ENCODE measurements at regions of chr2 and their contacts with region 1.

Region 1: GRCh38 chr2:112884869-112885505 is 26.0 kb upstream of the IL37 start:
- DNase-seq: no peak
- ATAC-seq: peak; percentile 28; the same call in 1 of the 2 replicates
- H3K4me3 ChIP-seq: no peak overlapping the region
- H3K27ac ChIP-seq: no peak overlapping the region
- H3K4me1 ChIP-seq: peaks cover 9% of the 10 kb centered on the region
- H3K27me3 ChIP-seq: no peaks in the 10 kb centered on the region
- CTCF ChIP-seq: peak; percentile 63
- POLR2A ChIP-seq: no peak
- RAD21 ChIP-seq: peak; percentile 66

Region 2: DNA sequence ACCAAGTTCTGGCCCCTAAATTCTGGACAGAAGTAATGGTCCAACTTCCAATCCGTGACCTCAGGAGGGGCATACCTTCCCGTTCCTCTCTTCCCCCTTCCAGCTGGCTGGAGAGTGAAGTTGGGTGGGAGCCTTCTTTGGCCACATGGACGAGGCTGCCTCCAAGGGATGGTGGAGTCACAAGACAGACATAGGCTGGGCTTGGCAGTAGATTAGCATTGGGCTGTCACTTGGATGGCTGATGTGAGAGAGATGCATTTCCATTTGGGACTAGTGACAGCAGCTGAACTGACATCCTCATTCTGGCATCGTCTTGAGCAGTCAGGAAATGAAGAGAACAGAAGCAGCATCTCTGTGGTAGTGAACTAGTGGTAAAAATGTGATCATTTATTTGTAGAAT is 151.5 kb before region 1 on chr2:
- CTCF ChIA-PET with region 1: no interaction called
- POLR2A ChIA-PET with region 1: no interaction called
- dilution Hi-C with region 1: no loop called
- in situ Hi-C with region 1: no loop called
- intact Hi-C with region 1: no loop called
- DNase-seq: no peak
- ATAC-seq: no peak
- H3K4me3 ChIP-seq: no peak overlapping the region
- H3K27ac ChIP-seq: no peak overlapping the region
- H3K4me1 ChIP-seq: peaks cover 1% of the 10 kb centered on the region; the same call in 1 of the 2 replicates
- H3K27me3 ChIP-seq: no peaks in the 10 kb centered on the region
- CTCF ChIP-seq: no peak
- POLR2A ChIP-seq: no peak
- RAD21 ChIP-seq: no peak

Region 3: DNA sequence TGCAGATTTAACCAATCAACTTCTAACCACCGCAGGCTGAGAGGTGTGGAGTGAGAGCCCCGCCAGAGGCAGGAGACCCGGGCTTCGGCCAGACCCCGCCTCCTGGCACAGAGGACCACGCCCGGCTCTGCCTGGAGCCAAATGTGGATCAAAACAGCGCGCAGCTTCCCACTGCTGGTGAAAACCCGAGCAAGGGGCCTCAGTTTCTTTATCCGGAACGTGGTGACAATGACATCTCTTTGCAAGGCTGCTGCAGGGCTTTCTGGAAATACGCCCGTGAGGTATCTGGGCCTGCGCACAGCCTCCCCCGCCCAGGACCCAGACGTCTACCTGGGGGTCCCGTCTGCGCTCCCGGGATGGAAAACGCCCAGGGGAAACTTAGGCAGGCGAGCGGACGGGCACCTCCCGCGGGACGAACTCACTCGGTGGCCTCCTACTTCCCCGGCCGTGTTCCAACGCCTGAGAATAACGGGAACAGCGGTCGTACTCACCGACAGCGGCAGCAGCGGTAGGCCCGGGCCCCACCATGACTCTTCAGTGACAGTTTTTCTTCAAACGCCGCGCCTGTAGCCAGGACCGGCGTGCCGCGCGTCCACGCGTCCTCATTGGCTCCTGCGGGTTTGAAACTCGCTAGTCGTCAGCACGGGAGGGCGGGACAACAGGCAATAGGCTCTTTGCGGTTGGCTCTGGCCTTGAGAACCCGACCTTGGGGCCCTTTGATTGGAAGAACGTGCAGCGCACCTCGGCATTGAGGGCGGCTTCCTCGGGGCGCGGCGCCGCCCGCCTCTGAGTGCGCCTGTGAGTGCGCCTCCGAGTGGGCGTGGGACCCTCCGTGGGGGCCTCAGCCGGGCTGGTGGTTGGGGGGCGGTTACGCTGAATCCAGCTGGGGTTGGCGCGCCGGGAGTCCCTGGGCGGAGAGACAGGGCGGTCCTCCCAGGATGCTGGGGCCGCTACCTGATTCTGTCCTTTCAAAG is 120.6 kb before region 1 on chr2 and contains the start of gene CKAP2L:
- CTCF ChIA-PET with region 1: no interaction called
- POLR2A ChIA-PET with region 1: no interaction called
- dilution Hi-C with region 1: no loop called
- in situ Hi-C with region 1: no loop called
- intact Hi-C with region 1: loop called (anchors 5 kb)
- DNase-seq: peak; percentile 98
- ATAC-seq: peak; percentile 99
- H3K4me3 ChIP-seq: peak within 1 kb of the TSS; percentile 79
- H3K27ac ChIP-seq: peak within 1 kb of the TSS; percentile 54
- H3K4me1 ChIP-seq: no peaks in the 10 kb centered on the region; the same call in 1 of the 2 replicates
- H3K27me3 ChIP-seq: no peaks in the 10 kb centered on the region
- CTCF ChIP-seq: no peak
- POLR2A ChIP-seq: peak; percentile 31; the same call in 1 of the 2 replicates
- RAD21 ChIP-seq: no peak
- total RNA-seq, gene CKAP2L: 9.9 and 13.3 TPM in 2 replicates

Region 4: GRCh38 chr2:112821142-112821541 is 63.8 kb before region 1 on chr2:
- CTCF ChIA-PET with region 1: no interaction called
- POLR2A ChIA-PET with region 1: no interaction called
- dilution Hi-C with region 1: no loop called
- in situ Hi-C with region 1: no loop called
- intact Hi-C with region 1: no loop called
- DNase-seq: no peak
- ATAC-seq: no peak
- H3K4me3 ChIP-seq: no peak overlapping the region
- H3K27ac ChIP-seq: no peak overlapping the region
- H3K4me1 ChIP-seq: peaks cover 10% of the 10 kb centered on the region
- H3K27me3 ChIP-seq: no peaks in the 10 kb centered on the region
- CTCF ChIP-seq: no peak
- POLR2A ChIP-seq: no peak
- RAD21 ChIP-seq: no peak